PC-3 (cell line): ENCODE measurements at regions of chr17 and their contacts with region 1.

Region 1: GRCh38 chr17:8048736-8049135 is 9.9 kb downstream of the ALOX15B start:
- DNase-seq: no peak
- ATAC-seq: no peak
- H3K4me3 ChIP-seq: no peak overlapping the region
- H3K27ac ChIP-seq: no peak overlapping the region
- H3K4me1 ChIP-seq: no peaks in the 10 kb centered on the region
- H3K27me3 ChIP-seq: no peaks in the 10 kb centered on the region
- CTCF ChIP-seq: no peak

Region 2: GRCh38 chr17:8032442-8032841 is 16.3 kb before region 1 on chr17:
- CTCF ChIA-PET with region 1: no interaction called
- POLR2A ChIA-PET with region 1: interaction called, 12 read pairs
- intact Hi-C with region 1: no loop called
- DNase-seq: no peak
- ATAC-seq: no peak
- H3K4me3 ChIP-seq: no peak overlapping the region
- H3K27ac ChIP-seq: peak overlapping the region; percentile 51
- H3K4me1 ChIP-seq: peaks cover 31% of the 10 kb centered on the region
- H3K27me3 ChIP-seq: no peaks in the 10 kb centered on the region
- CTCF ChIP-seq: no peak

Region 3: GRCh38 chr17:8204761-8205555 is 156.2 kb after region 1 on chr17:
- CTCF ChIA-PET with region 1: no interaction called
- POLR2A ChIA-PET with region 1: no interaction called
- intact Hi-C with region 1: no loop called
- DNase-seq: no peak
- ATAC-seq: no peak
- H3K4me3 ChIP-seq: no peak overlapping the region
- H3K27ac ChIP-seq: no peak overlapping the region
- H3K4me1 ChIP-seq: peaks cover 8% of the 10 kb centered on the region
- H3K27me3 ChIP-seq: no peaks in the 10 kb centered on the region
- CTCF ChIP-seq: no peak